MCF 10A (cell line): ENCODE measurements at regions of chr6 and their contacts with region 1.

Region 1: DNA sequence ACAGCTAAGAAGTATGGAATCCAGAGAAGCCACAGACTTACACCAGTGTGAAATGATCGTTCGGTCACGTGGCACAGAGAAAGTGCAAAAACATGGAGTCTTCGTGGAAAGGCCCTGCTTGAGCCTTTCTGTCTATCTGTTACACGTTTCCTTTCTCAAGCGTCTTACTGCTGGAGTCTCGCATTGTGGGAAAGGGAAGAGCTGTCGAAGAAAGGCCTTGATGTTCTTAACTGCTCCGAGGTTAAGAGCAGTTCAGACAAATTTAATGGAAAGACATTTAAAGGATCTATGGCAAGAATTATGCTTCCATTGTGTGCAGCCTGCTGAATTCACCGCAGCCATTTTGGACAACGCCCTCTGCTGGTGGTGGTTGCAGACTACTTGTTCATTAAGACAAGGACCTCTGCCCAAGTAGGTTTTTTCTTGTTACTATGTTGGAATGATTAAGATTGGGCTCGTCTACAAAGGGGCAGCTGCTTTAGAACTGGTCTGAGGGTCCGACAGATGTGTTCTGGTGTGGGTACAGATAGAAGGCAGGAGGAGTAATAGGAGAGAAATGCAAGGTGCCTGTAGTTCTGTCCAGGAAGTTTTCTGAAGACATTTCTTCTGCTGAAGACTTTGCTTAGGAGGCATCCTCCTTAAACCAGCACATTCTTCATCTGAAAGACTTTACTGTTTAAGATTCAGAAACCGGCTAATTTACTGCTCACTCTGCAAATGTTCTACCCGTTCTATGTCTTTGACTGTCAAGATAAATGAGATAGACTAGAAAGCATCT is 24.7 kb upstream of the CCN6 start:
- DNase-seq: peak; percentile 69
- H3K4me3 Mint-ChIP-seq: no peak overlapping the region
- H3K27ac Mint-ChIP-seq: no peak overlapping the region
- H3K4me1 Mint-ChIP-seq: peaks cover 10% of the 10 kb centered on the region
- H3K27me3 Mint-ChIP-seq: peaks cover 11% of the 10 kb centered on the region
- CTCF ChIP-seq: peak; percentile 71

Region 2: GRCh38 chr6:112010328-112010727 is 18.9 kb before region 1 on chr6:
- CTCF ChIA-PET with region 1: interaction called, 12 read pairs
- POLR2A ChIA-PET with region 1: no interaction called
- intact Hi-C with region 1: no loop called
- DNase-seq: peak; percentile 20
- H3K4me3 Mint-ChIP-seq: no peak overlapping the region
- H3K27ac Mint-ChIP-seq: no peak overlapping the region
- H3K4me1 Mint-ChIP-seq: peaks cover 14% of the 10 kb centered on the region
- H3K27me3 Mint-ChIP-seq: no peaks in the 10 kb centered on the region
- CTCF ChIP-seq: no peak

Region 3: GRCh38 chr6:112018619-112019416 is 10.4 kb before region 1 on chr6:
- CTCF ChIA-PET with region 1: interaction called, 16 read pairs
- POLR2A ChIA-PET with region 1: no interaction called
- intact Hi-C with region 1: no loop called
- DNase-seq: no peak
- H3K4me3 Mint-ChIP-seq: no peak overlapping the region
- H3K27ac Mint-ChIP-seq: no peak overlapping the region
- H3K4me1 Mint-ChIP-seq: peaks cover 27% of the 10 kb centered on the region
- H3K27me3 Mint-ChIP-seq: no peaks in the 10 kb centered on the region
- CTCF ChIP-seq: no peak